CD14-positive monocyte (primary cell): ENCODE measurements at regions of chr3 and their contacts with region 1.

Region 1: GRCh38 chr3:195106418-195106906 is 164.5 kb downstream of the XXYLT1 start:
- DNase-seq: peak; percentile 51 to 71 (median 54)
- H3K4me3 ChIP-seq: peak overlapping the region in 1 of 3 experiments; percentile 60
- H3K4me3 Mint-ChIP-seq: peak overlapping the region; percentile 63 to 83
- H3K27ac ChIP-seq: peak overlapping the region in 1 of 2 donors; percentile 66
- H3K27ac Mint-ChIP-seq: peak overlapping the region in 6 of 7 donors; percentile 69 to 86 (median 79)
- H3K4me1 ChIP-seq: peaks cover 64 to 82% of the 10 kb centered on the region in 2 donors
- H3K4me1 Mint-ChIP-seq: peaks cover 60% of the 10 kb centered on the region
- H3K27me3 ChIP-seq: no peaks in the 10 kb centered on the region
- H3K27me3 Mint-ChIP-seq: peaks cover 0 to 3% (median 0%) of the 10 kb centered on the region in 3 donors
- CTCF ChIP-seq: peak; percentile 100

Region 2: DNA sequence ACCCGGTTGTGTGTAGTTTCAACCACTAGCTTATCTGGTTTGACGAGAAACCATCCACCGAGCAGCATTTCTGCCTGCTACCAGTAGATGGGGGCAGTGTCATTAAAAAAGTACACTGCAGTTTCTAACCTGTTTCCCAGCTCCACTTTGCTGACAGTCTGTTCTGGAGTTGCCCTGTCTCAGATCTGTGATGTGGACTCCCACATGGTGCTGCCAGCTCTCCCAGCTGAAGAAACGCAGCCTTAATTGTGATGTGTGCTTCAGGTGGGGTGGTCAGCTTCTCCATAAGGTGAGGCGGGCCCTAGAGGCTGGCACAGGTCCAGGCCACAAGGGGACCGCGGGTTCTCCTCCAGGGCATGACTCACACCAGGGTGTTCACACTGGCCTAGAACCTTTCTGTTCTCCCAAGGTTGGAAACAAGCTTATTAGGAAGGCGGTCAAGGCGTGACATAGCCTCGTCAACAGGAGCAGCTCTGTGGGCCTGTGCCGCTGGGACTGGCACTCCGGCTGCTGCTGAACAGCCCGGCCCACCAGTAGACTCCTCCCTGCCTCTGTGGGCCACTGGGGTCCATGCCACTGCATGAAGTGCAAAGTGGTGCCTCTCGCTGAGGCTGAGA is 423.7 kb before region 1 on chr3:
- intact Hi-C with region 1: loop called (anchors 2 kb)
- DNase-seq: peak; percentile 63 to 79 (median 68)
- H3K4me3 ChIP-seq: no peak overlapping the region
- H3K4me3 Mint-ChIP-seq: peak overlapping the region; percentile 57 to 59
- H3K27ac ChIP-seq: peak overlapping the region in 1 of 2 donors; percentile 1
- H3K27ac Mint-ChIP-seq: peak overlapping the region in 6 of 7 donors; percentile 24 to 86 (median 68)
- H3K4me1 ChIP-seq: peaks cover 29 to 40% of the 10 kb centered on the region in 2 donors
- H3K4me1 Mint-ChIP-seq: peaks cover 34% of the 10 kb centered on the region
- H3K27me3 ChIP-seq: no peaks in the 10 kb centered on the region
- H3K27me3 Mint-ChIP-seq: peaks cover 2 to 4% (median 2%) of the 10 kb centered on the region in 3 donors
- CTCF ChIP-seq: peak; percentile 87

Region 3: DNA sequence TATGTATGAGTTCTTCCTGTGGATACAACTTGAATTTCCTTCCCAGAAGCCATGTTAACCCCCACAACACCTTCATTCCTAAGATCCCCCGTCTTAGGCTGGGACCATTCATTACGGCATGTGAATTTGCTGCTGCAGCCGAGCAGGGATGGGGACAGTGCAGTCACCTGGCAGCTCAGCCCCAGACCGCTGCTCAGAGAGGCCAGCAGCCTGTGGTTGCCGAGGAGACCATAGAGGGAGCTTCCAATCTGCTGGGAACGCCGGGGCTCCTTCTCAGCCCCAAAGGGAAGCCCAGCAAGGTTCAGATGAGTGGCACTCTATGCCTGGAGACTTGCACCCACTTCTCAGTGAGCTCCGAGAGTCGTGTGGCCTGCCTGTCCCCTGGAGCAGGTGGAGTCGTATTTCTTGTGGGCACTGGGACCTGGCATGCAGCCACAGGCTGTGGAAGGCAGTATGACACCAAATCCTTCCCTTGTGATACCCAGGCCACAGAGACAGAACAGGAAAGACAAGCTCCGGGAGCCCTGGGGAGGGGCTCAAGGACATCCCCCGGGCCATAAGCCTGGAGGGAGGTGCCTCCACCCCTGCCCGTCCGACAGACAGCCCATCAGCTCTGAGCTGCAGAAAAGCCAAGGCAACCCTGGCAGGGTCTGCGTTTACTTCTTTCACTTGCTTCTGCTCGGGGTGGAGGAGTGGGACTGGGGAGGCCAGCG is 253.5 kb before region 1 on chr3:
- intact Hi-C with region 1: no loop called
- DNase-seq: no peak
- H3K4me3 ChIP-seq: no peak overlapping the region
- H3K4me3 Mint-ChIP-seq: no peak overlapping the region
- H3K27ac ChIP-seq: no peak overlapping the region
- H3K27ac Mint-ChIP-seq: peak overlapping the region in 1 of 7 donors; percentile 42
- H3K4me1 ChIP-seq: peaks cover 17 to 19% of the 10 kb centered on the region in 2 donors
- H3K4me1 Mint-ChIP-seq: peaks cover 21% of the 10 kb centered on the region
- H3K27me3 ChIP-seq: no peaks in the 10 kb centered on the region
- H3K27me3 Mint-ChIP-seq: peaks cover 0 to 5% (median 3%) of the 10 kb centered on the region in 3 donors
- CTCF ChIP-seq: no peak

Region 4: GRCh38 chr3:194871143-194871863 is 235.2 kb before region 1 on chr3:
- intact Hi-C with region 1: loop called in 1 of 2 experiments (anchors 5 kb)
- DNase-seq: peak; percentile 51 to 65 (median 53)
- H3K4me3 ChIP-seq: peak overlapping the region in 1 of 3 experiments; percentile 49
- H3K4me3 Mint-ChIP-seq: peak overlapping the region in 1 of 2 donors; percentile 83
- H3K27ac ChIP-seq: peak overlapping the region; percentile 73 to 90
- H3K27ac Mint-ChIP-seq: peak overlapping the region; percentile 94 to 99 (median 98)
- H3K4me1 ChIP-seq: peaks cover 48 to 59% of the 10 kb centered on the region in 2 donors
- H3K4me1 Mint-ChIP-seq: peaks cover 53% of the 10 kb centered on the region
- H3K27me3 ChIP-seq: no peaks in the 10 kb centered on the region
- H3K27me3 Mint-ChIP-seq: peaks cover 0 to 3% (median 2%) of the 10 kb centered on the region in 3 donors
- CTCF ChIP-seq: no peak

Region 5: DNA sequence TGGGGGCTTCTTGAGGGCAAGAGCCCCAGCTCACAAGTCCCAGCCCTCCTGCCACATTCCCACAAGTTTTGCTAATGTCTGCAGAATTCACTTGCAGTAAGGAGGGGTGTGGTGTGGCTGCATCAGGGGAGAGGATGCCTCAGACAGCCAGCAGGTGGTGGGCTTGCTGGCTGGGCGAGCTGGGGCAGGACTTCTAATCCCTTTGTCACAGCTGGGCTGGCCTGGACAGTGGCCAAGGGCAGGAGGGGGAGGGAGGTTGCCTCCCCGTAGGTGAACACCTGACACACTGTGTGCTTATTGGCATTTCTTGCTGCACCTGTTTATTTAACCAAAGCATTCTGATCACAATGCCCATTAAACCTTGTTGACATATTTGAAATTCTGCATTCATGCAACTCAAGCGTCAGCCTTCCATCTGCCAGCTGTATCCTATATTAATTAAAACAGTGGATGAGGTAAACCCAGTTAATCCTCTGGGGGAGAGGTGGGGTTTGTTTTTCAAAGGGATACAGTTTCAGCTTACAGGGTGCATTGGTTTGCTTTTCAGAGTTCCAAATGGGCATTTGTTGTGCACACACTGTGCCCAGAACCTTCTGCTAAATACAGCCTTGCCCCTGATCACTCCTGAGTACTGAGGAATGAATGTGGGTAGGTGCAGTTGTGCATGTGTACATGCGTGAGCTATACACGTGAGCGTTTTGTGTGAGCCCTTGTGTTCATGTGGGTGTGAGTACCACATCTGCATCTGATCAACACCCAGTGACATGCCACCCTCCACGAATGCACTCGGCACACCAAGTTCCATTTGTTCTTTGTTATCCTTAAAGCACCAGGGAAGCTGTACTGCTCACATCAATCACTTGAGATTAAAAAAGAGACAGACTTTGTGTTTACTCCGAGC is 104.3 kb before region 1 on chr3:
- intact Hi-C with region 1: loop called (anchors 5 to 10 kb)
- DNase-seq: peak; percentile 29 to 48 (median 41)
- H3K4me3 ChIP-seq: peak overlapping the region in 1 of 3 experiments; percentile 41
- H3K4me3 Mint-ChIP-seq: peak overlapping the region in 1 of 2 donors; percentile 81
- H3K27ac ChIP-seq: peak overlapping the region in 1 of 2 donors; percentile 80
- H3K27ac Mint-ChIP-seq: peak overlapping the region; percentile 84 to 93 (median 86)
- H3K4me1 ChIP-seq: peaks cover 60 to 71% of the 10 kb centered on the region in 2 donors
- H3K4me1 Mint-ChIP-seq: peaks cover 75% of the 10 kb centered on the region
- H3K27me3 ChIP-seq: no peaks in the 10 kb centered on the region
- H3K27me3 Mint-ChIP-seq: peaks cover 0 to 5% (median 0%) of the 10 kb centered on the region in 3 donors
- CTCF ChIP-seq: peak; percentile 60

Region 6: DNA sequence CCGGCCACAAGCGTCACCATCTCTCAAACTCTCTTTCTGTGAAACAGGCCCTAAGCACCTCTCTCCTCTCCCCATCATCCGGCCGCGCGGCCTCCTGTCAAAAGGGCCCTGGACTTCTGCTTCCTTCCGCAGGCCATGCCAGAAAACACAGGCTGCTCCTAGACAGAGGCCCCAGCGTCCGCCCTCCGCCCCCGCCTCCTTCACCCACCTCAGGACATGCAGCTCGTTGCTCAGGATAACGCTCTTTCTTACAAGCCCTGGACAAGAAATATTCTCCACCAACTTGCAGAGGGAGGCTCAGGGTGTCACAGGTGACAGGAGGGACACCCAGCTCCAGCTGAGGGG is 47.5 kb before region 1 on chr3:
- intact Hi-C with region 1: no loop called
- DNase-seq: no peak
- H3K4me3 ChIP-seq: no peak overlapping the region
- H3K4me3 Mint-ChIP-seq: peak overlapping the region; percentile 39 to 67
- H3K27ac ChIP-seq: no peak overlapping the region
- H3K27ac Mint-ChIP-seq: no peak overlapping the region
- H3K4me1 ChIP-seq: peaks cover 7% of the 10 kb centered on the region in 2 donors
- H3K4me1 Mint-ChIP-seq: peaks cover 21% of the 10 kb centered on the region
- H3K27me3 ChIP-seq: no peaks in the 10 kb centered on the region
- H3K27me3 Mint-ChIP-seq: peaks cover 4 to 10% (median 6%) of the 10 kb centered on the region in 3 donors
- CTCF ChIP-seq: no peak

Region 7: GRCh38 chr3:195522254-195523023 is 416.0 kb after region 1 on chr3:
- intact Hi-C with region 1: no loop called
- DNase-seq: peak in 2 of 3 donors; percentile 32 to 60
- H3K4me3 ChIP-seq: no peak overlapping the region
- H3K4me3 Mint-ChIP-seq: no peak overlapping the region
- H3K27ac ChIP-seq: no peak overlapping the region
- H3K27ac Mint-ChIP-seq: peak overlapping the region in 2 of 7 donors; percentile 13 to 31
- H3K4me1 ChIP-seq: no peaks in the 10 kb centered on the region
- H3K4me1 Mint-ChIP-seq: peaks cover 4% of the 10 kb centered on the region
- H3K27me3 ChIP-seq: no peaks in the 10 kb centered on the region
- H3K27me3 Mint-ChIP-seq: no peaks in the 10 kb centered on the region
- CTCF ChIP-seq: peak; percentile 81